ENCODE measurements at regions of chr17 and their contacts with region 1.

Region 1: DNA sequence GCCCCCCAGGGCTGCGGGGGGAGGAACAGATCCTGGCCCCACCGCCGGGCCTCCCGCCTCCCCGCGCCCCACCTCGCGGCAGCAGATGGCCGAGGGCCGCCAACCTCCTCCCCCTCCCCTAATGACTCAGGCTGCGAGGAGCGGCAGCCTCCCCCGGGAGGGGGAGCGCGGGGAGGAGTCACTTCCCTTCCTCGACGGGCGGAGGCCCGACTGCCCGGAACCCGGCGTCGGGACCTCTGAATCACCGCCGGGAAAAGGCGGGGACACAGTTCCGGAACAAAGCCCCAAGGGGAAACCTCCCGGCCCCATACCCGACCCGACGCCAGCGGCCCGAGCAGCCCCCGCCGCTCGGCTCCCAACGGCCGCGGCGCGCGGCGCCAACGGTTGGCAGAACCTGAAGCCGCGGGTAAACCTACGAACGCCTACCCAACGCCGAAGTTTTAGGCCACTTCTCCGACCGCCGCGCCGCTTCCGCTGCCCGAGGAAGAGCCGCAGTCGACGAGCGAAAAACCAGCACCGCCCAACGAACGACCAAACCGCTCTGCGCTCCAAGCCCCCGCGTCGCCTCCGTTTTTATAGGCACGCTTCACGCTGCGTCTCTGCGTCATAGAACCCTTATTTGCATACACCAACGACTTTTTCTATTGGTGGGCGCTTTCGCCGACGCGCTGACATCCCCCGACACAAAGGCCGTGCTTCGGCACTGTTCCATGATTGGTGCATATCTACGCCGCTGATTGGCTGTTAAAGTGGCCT is 5.2 kb upstream of the UNK start:
- DNase-seq: peak; percentile 97
- ATAC-seq: peak; percentile 70
- H3K4me3 Mint-ChIP-seq: peak overlapping the region; percentile 86
- H3K27ac Mint-ChIP-seq: peak overlapping the region; percentile 97
- H3K4me1 Mint-ChIP-seq: peaks cover 51% of the 10 kb centered on the region
- H3K27me3 Mint-ChIP-seq: peaks cover 3% of the 10 kb centered on the region

Region 2: DNA sequence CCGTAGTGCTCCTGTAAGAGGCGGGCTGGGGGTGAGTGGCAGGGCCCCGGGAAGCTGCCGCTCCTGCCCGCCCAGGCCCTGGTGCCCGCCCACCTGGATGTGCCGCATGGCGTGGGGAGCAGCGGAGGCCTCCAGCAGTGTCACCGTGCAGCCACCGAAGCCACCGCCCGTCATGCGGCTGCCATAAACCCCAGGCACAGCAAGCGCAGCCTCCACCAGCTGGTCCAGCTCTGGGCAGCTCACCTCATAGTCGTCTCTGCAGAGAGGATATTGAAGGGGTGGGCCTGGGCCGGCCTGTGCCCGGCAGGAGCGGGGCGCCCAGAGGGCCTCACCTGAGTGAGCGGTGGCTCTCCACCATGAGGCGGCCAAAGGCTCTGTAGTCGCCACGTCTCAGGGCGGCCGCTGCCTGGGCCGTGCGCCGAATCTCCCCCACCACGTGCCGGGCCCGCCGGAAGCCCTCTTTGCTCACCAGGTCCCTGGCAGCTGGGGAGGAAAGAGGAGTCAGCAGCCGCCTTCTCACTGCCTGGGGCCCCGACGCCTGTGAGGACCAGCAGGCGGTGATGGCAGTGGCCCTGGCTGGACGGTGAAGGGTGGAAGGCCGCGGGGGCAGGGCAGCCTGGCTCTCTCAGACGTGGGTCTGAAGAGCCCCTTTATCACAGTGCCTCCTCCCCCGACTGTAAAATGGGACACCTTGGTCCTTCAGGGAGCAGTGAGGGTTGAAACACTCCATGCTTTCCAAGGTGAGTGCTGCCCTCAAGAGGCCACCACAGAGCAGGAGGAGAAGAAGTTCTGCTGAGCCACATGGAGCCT is 21.1 kb before region 1 on chr17:
- CTCF ChIA-PET with region 1: interaction called, 35 read pairs
- POLR2A ChIA-PET with region 1: interaction called, 188 read pairs
- DNase-seq: no peak
- ATAC-seq: no peak
- H3K4me3 Mint-ChIP-seq: no peak overlapping the region
- H3K27ac Mint-ChIP-seq: no peak overlapping the region
- H3K4me1 Mint-ChIP-seq: peaks cover 14% of the 10 kb centered on the region
- H3K27me3 Mint-ChIP-seq: no peaks in the 10 kb centered on the region

Region 3: GRCh38 chr17:75845049-75845860 is 65.8 kb after region 1 on chr17:
- CTCF ChIA-PET with region 1: interaction called, 7 read pairs
- POLR2A ChIA-PET with region 1: interaction called, 10 read pairs
- DNase-seq: peak; percentile 74
- ATAC-seq: peak; percentile 49
- H3K4me3 Mint-ChIP-seq: peak overlapping the region; percentile 57
- H3K27ac Mint-ChIP-seq: peak overlapping the region; percentile 77
- H3K4me1 Mint-ChIP-seq: peaks cover 36% of the 10 kb centered on the region
- H3K27me3 Mint-ChIP-seq: no peaks in the 10 kb centered on the region

Measured in activated CD8-positive, alpha-beta T cell treated with anti-CD3 and anti-CD28 coated beads, Interleukin-2, amount 10 ng/mL, durations not matched to agents 7 days and 5 days (primary cell).